ENCODE measurements at regions of chr2 and their contacts with region 1.

Region 1: DNA sequence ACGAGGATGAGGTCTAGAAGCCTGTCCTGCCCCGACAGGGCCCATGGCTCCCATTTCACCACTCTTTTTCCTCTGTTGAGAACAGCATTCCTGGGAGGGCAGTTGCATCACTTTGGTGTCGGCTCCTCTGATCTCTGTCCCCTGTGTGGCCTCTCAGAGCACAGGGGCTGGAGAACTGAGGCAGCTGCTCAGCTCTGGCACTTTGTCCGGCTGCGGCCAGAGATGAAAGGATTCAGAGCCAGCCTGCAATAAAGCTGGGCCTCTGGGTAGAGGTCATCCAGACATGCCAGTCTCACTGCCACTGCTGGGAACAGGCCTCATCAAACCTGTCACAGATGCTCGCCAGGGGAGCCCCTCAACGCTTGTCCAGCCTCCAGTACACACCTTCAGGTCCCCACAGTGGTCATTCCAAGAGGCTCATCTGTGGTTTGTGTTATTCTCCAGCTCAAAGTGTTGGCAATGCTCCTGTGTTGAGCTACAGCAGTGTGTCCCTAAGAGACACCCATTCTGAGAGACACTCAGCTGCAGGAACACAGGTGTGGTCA is 13.1 kb upstream of the ROCK2 start:
- DNase-seq: peak; percentile 82 to 95
- ATAC-seq: peak; percentile 90 to 94
- H3K4me3 ChIP-seq: no peak overlapping the region
- H3K27ac ChIP-seq: peak overlapping the region; percentile 67 to 81 (median 77)
- H3K4me1 ChIP-seq: peaks cover 13 to 32% of the 10 kb centered on the region in 2 donors
- H3K27me3 ChIP-seq: no peaks in the 10 kb centered on the region
- CTCF ChIP-seq: no peak
- POLR2A ChIP-seq: no peak

Region 2: GRCh38 chr2:11090187-11090586 is 267.3 kb before region 1 on chr2:
- in situ Hi-C with region 1: no loop called
- intact Hi-C with region 1: no loop called
- DNase-seq: no peak
- ATAC-seq: no peak
- H3K4me3 ChIP-seq: no peak overlapping the region
- H3K27ac ChIP-seq: no peak overlapping the region
- H3K4me1 ChIP-seq: no peaks in the 10 kb centered on the region
- H3K27me3 ChIP-seq: no peaks in the 10 kb centered on the region
- CTCF ChIP-seq: no peak
- POLR2A ChIP-seq: no peak

Region 3: GRCh38 chr2:11370377-11371091 is 13.0 kb after region 1 on chr2:
- in situ Hi-C with region 1: no loop called
- intact Hi-C with region 1: loop called (anchors 2 kb)
- DNase-seq: no peak
- ATAC-seq: no peak
- H3K4me3 ChIP-seq: no peak overlapping the region
- H3K27ac ChIP-seq: peak overlapping the region; percentile 81 to 87 (median 84)
- H3K4me1 ChIP-seq: peaks cover 66 to 71% of the 10 kb centered on the region in 2 donors
- H3K27me3 ChIP-seq: no peaks in the 10 kb centered on the region
- CTCF ChIP-seq: no peak
- POLR2A ChIP-seq: no peak